ENCODE measurements at regions of chr1 and their contacts with region 1.

Region 1: DNA sequence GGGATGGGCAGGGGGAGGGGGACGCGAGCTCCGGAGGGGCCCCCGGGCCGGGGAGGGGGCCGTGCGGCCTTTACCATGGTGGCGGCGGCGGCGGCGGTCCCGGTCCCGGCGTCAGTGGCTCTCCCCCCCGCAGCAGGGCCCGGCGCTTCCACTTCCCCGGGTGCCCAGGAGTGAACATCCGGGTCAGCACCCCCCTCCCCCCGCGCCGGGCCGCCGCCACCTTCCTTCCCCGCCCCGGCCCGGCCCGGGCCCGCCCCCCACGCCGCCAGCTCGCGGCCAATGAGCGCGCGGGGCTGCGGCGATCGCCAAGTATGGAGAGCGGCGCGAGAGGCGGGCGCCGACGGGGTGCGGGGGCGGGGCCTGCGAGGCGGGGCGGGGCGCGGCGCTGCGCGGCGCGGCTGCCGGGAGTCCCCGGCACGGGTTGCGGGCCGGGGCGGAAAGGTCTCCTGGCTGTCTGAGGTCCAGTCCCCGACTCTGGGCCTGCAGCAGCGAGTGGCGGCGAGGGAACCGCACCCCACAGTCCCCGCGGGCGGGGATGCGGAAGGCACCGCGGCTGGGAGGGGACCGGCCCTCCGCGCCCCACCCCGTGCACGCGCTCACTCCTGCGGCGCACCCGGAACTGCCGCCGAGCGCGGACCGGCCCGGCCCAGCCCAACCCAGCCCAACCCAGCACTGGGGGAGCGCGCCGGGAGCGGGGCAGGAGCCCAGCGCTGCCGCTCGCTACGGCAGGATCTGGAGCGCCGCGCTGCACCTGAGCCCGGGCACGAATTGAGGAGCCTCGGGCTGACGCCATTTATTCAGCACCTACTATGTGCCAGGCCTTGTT is at the start of gene CAPZB:
- DNase-seq: peak; percentile 79
- H3K4me3 ChIP-seq: peak within 1 kb of the TSS; percentile 69 to 98 (median 72)
- H3K27ac ChIP-seq: peak within 1 kb of the TSS; percentile 91
- H3K4me1 ChIP-seq: peaks cover 35% of the 10 kb centered on the region
- H3K27me3 ChIP-seq: no peaks in the 10 kb centered on the region
- CTCF ChIP-seq: no peak
- POLR2A ChIP-seq: peak; percentile 62
- total RNA-seq, gene CAPZB: 339 and 347 TPM in 2 replicates

Region 2: DNA sequence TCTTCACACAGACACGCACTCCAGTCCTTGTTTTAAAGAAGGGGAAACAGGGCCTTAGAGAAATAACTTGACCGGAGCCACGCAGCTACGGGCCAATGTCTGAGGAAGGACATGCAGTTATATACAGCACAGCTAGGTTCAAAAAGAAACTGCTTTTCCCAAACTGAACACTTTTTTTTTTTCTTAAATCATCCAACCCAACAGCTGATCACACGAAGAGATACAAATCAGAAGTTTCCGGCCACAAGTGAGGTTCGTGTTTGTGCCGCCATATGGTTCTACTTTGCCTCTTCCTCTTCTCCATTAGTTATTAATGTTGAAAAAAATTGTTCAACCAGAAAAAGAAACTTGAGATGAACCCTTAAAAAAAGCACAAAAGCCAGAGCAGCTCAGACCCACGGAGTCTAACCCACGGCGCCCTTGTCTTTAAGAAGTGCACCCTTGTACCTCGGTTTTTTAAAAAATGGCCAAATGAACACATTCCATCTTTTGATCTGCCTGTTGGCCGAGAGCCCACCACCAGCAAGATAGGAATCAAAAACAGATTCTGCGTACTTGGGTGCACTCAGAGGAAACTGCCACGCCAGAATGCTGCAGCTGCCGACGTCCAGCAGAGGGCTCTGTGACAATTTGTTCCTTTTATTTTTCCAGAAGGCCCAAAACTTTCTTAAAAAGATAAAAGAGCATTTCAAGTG is 94.5 kb before region 1 on chr1:
- CTCF ChIA-PET with region 1: interaction called, 10 read pairs
- POLR2A ChIA-PET with region 1: no interaction called
- dilution Hi-C with region 1: no loop called
- intact Hi-C with region 1: loop called (anchors 1 kb)
- DNase-seq: peak; percentile 82
- H3K4me3 ChIP-seq: no peak overlapping the region
- H3K27ac ChIP-seq: peak overlapping the region; percentile 52
- H3K4me1 ChIP-seq: peaks cover 21% of the 10 kb centered on the region
- H3K27me3 ChIP-seq: no peaks in the 10 kb centered on the region
- CTCF ChIP-seq: peak; percentile 84 to 86
- POLR2A ChIP-seq: no peak

Region 3: GRCh38 chr1:19468397-19468956 is 17.1 kb before region 1 on chr1:
- CTCF ChIA-PET with region 1: interaction called, 3 read pairs
- POLR2A ChIA-PET with region 1: interaction called, 3 read pairs
- dilution Hi-C with region 1: no loop called
- intact Hi-C with region 1: loop called (anchors 1 kb)
- DNase-seq: no peak
- H3K4me3 ChIP-seq: no peak overlapping the region
- H3K27ac ChIP-seq: peak overlapping the region; percentile 60
- H3K4me1 ChIP-seq: peaks cover 20% of the 10 kb centered on the region
- H3K27me3 ChIP-seq: no peaks in the 10 kb centered on the region
- CTCF ChIP-seq: no peak
- POLR2A ChIP-seq: no peak

Region 4: GRCh38 chr1:19582302-19582701 is 96.7 kb after region 1 on chr1:
- CTCF ChIA-PET with region 1: interaction called, 15 read pairs
- POLR2A ChIA-PET with region 1: no interaction called
- dilution Hi-C with region 1: no loop called
- intact Hi-C with region 1: loop called (anchors 2 kb)
- DNase-seq: peak; percentile 44
- H3K4me3 ChIP-seq: no peak overlapping the region
- H3K27ac ChIP-seq: no peak overlapping the region
- H3K4me1 ChIP-seq: no peaks in the 10 kb centered on the region
- H3K27me3 ChIP-seq: peaks cover 2 to 5% of the 10 kb centered on the region in 2 experiments
- CTCF ChIP-seq: peak; percentile 65 to 72
- POLR2A ChIP-seq: no peak

Measured in endothelial cell of umbilical vein (primary cell).